Dorsolateral prefrontal cortex (tissue), 120 donors: ENCODE measurements at regions of chr6 and their contacts with region 1.

Region 1: GRCh38 chr6:90296346-90297114 is at the start of gene BACH2:
- DNase-seq: peak; percentile 90 to 95 (median 92)
- H3K4me3 ChIP-seq: peak within 1 kb of the TSS; percentile 56 to 95 (median 78)
- H3K27ac ChIP-seq: peak within 1 kb of the TSS; percentile 7 to 97 (median 94)
- H3K27me3 ChIP-seq: no peaks in the 10 kb centered on the region
- CTCF ChIP-seq: peak in 29 of 56 donors; percentile 10 to 53 (median 25)
- total RNA-seq, gene BACH2: 6.8 to 31.2 (median 16.9) TPM

Region 2: GRCh38 chr6:89959883-89960282 is 336.6 kb before region 1 on chr6:
- intact Hi-C with region 1: no loop called
- DNase-seq: no peak
- H3K4me3 ChIP-seq: no peak overlapping the region
- H3K27ac ChIP-seq: no peak overlapping the region
- H3K27me3 ChIP-seq: no peaks in the 10 kb centered on the region
- CTCF ChIP-seq: no peak

Region 3: DNA sequence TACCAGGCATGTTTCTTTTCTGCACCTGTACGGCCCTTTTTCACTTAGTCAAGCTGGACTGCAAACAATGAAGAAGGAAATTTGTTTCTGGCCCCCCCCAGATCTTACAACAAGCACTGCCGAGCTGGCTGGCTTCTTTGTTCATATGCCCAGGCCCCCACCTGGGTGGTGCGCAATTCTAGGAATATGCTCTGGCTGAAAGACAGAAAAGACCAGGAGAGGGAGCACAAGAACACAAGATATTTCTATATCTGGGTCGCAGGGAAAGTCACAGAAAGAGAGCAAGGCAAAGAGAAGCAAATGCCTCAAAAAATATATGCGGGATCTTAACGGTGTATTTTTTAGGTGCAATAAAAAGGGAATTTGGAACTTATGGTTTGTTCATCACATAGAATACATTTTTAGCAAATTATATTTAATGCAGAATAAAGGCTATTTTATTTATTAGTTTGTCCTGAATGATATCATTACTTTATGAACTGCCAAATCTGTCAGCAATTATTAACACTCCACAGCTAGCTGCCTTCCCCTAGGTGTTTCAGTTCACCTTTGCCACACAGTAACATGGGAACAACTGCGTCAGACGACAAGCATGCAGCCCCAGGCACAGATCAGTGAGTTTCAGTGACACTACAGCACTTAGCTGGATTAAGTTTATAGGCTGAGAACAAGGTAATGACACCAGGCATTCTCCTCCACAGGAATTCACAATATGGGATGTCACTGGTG is 325.8 kb before region 1 on chr6:
- intact Hi-C with region 1: loop called (anchors 2 to 5 kb)
- DNase-seq: peak in 7 of 10 donors; percentile 53 to 81 (median 57)
- H3K4me3 ChIP-seq: peak overlapping the region in 3 of 59 donors; percentile 1 to 20 (median 2)
- H3K27ac ChIP-seq: peak overlapping the region in 12 of 59 donors; percentile 10 to 65 (median 19)
- H3K27me3 ChIP-seq: no peaks in the 10 kb centered on the region
- CTCF ChIP-seq: peak; percentile 21 to 83 (median 70)

Region 4: GRCh38 chr6:89984926-89985750 is 311.4 kb before region 1 on chr6:
- intact Hi-C with region 1: loop called in 1 of 2 experiments (anchors 5 kb)
- DNase-seq: peak; percentile 25 to 97 (median 86)
- H3K4me3 ChIP-seq: peak overlapping the region in 45 of 59 donors; percentile 0 to 59 (median 34)
- H3K27ac ChIP-seq: peak overlapping the region in 57 of 59 donors; percentile 7 to 92 (median 77)
- H3K27me3 ChIP-seq: no peaks in the 10 kb centered on the region
- CTCF ChIP-seq: peak in 6 of 56 donors; percentile 10 to 23 (median 18)

Region 5: DNA sequence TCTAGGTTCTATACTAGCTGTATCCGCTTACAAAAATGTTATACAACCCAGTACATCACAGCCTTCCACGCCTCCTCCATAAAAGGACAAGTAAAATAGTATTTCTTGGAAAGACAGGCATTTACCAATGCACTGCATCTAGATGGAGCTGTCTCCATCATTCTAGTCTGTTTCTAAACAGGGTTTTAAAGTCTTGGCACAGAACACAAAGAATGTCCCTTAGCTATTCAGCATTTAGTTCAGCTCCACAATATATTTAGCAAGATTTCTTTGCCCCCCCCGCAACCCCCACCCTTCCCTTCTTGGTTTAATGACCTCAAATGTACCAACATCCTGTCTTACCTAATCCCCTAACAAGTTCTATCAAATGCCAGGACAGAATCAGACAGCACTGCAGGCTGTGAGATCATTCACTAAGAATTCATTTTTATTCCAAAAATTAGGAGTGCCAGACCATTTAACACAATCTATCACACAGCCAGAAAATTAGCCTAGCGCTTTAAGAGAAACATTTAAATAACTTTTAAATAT is 198.5 kb before region 1 on chr6:
- intact Hi-C with region 1: loop called (anchors 2 to 10 kb)
- DNase-seq: peak in 1 of 10 donors; percentile 24
- H3K4me3 ChIP-seq: peak overlapping the region in 7 of 59 donors; percentile 1 to 32 (median 18)
- H3K27ac ChIP-seq: peak overlapping the region in 24 of 59 donors; percentile 1 to 70 (median 30)
- H3K27me3 ChIP-seq: no peaks in the 10 kb centered on the region
- CTCF ChIP-seq: peak in 55 of 56 donors; percentile 23 to 74 (median 56)

Region 6: GRCh38 chr6:90383196-90383822 is 86.8 kb after region 1 on chr6:
- intact Hi-C with region 1: no loop called
- DNase-seq: no peak
- H3K4me3 ChIP-seq: no peak overlapping the region
- H3K27ac ChIP-seq: no peak overlapping the region
- H3K27me3 ChIP-seq: peaks cover 0 to 5% (median 0%) of the 10 kb centered on the region in 45 donors
- CTCF ChIP-seq: no peak

Region 7: GRCh38 chr6:90393232-90393884 is 96.8 kb after region 1 on chr6:
- intact Hi-C with region 1: loop called (anchors 5 to 10 kb)
- DNase-seq: peak in 6 of 10 donors; percentile 32 to 62 (median 54)
- H3K4me3 ChIP-seq: peak overlapping the region in 1 of 59 donors; percentile 20
- H3K27ac ChIP-seq: no peak overlapping the region
- H3K27me3 ChIP-seq: no peaks in the 10 kb centered on the region
- CTCF ChIP-seq: peak; percentile 62 to 88 (median 79)

Region 8: DNA sequence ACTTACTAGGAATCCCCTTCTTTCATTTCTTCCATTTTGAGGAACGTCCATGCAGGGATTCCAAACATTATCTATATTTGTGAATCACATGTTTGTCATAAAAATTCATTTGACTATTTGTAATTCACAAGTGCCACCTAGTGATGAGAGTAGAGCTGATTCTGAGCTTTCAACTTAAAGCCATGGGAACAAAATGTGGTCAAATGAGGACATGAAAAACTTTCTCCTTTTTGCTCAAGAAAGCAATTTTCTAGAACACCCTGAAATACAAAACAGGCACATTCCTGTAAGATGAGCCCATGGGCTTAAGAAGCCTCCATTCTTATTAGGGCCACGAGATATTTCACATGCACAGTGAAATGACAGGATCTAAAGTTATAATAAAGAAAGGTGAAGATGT is 278.1 kb after region 1 on chr6:
- intact Hi-C with region 1: loop called in 1 of 2 experiments (anchors 10 kb)
- DNase-seq: no peak
- H3K4me3 ChIP-seq: no peak overlapping the region
- H3K27ac ChIP-seq: no peak overlapping the region
- H3K27me3 ChIP-seq: no peaks in the 10 kb centered on the region
- CTCF ChIP-seq: peak in 50 of 56 donors; percentile 19 to 68 (median 44)